Activated B cell treated with CpG ODN at 0.5 μM for 24 hours (primary cell): ENCODE measurements at regions of chr10 and their contacts with region 1.

Region 1: DNA sequence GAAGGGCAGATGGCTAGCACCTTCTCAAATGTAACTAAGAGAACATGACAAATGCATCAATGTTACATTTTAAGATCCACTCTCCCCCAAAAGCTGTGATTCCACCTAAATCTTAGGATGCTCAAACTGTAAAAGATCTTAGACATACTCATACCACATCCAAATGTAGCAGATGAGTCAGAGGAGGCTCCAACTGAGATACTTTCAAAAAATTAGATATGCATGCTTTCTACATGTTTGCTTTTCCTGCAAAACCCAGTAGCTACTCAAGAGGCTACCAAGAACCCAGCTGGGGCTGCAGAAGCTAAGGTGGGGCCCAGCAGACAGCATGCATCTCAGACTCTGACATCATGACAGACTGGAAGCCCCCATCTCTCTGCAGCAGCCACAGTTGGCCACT is 31.4 kb upstream of the FRMD4A start:
- DNase-seq: no peak
- ATAC-seq: no peak
- H3K4me3 Mint-ChIP-seq: no peak overlapping the region
- H3K27ac Mint-ChIP-seq: no peak overlapping the region
- H3K4me1 Mint-ChIP-seq: no peaks in the 10 kb centered on the region
- H3K27me3 Mint-ChIP-seq: peaks cover 5% of the 10 kb centered on the region
- CTCF ChIP-seq: no peak

Region 2: DNA sequence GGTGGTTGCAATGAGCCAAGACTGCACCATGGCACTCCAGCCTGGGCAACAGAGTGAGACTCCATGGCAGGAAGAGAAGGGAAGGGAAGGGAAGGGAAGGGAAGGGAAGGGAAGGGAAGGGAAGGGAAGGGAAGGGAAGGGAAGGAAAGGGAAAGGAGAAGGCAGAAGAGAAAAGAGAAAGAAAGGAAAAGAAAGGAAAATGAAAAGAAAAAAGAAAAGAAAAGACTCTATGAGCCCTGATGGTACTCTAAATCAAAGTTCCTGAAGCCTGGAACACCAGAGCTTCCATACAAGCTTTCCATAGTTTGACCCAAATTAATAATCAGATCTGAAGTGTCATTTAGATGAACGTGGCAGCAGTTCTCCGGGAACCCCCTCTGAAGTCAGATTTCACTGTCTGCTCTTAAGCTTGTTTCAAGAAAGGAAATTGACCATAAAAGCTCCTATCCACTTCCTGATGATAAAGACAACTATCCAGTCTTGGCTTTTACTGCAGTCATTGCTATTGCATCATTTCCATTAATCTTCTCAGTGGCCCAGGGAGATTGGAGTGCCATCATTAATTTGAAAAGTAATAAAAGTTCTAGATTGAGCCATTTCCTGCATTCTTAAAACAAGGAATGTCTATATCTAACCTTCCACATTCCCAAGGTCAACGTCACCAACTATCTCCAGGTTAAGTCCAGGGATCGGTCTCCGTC is 12.8 kb after region 1 on chr10:
- CTCF ChIA-PET with region 1: no interaction called
- POLR2A ChIA-PET with region 1: interaction called, 10 read pairs
- intact Hi-C with region 1: no loop called
- DNase-seq: no peak
- ATAC-seq: no peak
- H3K4me3 Mint-ChIP-seq: no peak overlapping the region
- H3K27ac Mint-ChIP-seq: no peak overlapping the region
- H3K4me1 Mint-ChIP-seq: no peaks in the 10 kb centered on the region
- H3K27me3 Mint-ChIP-seq: peaks cover 24% of the 10 kb centered on the region
- CTCF ChIP-seq: no peak